ENCODE measurements at regions of chr10 and their contacts with region 1.

Region 1: DNA sequence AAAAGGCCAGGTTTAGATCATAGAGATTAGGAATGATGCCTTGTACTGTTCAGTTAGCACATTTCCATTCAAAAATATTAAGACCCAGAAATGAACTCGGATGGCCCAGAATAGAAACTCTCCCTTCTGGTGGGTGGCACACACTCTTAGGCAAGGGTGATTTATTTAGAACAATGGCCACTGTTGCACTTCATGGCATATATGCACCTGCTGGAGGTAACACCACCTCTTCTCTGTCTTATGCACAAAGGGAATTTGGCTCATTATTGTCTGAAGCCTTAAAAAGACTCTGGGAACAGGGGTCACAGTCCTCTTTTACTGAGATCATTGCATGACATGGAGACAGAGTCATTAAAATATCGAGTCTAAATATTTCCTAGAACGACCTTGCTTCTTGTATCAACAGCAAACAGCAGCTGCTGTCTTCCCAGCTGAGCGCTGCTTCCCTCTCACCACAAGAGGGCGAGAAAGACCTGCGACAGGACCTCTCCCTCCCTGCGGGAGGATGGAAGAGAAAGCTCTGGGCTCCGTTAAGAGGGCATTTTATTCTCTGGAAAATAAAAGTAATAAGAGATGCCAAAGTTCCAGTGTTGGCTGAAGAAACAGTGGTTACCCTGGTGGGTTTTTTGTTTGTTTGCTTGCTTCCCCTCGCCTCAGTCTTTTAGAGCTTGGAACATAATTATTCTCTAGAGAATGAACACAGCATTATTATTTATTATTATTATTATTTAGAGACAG is 13.6 kb upstream of the BAMBI start:
- DNase-seq: peak; percentile 45
- H3K4me3 ChIP-seq: no peak overlapping the region
- CTCF ChIP-seq: peak; percentile 95

Region 2: DNA sequence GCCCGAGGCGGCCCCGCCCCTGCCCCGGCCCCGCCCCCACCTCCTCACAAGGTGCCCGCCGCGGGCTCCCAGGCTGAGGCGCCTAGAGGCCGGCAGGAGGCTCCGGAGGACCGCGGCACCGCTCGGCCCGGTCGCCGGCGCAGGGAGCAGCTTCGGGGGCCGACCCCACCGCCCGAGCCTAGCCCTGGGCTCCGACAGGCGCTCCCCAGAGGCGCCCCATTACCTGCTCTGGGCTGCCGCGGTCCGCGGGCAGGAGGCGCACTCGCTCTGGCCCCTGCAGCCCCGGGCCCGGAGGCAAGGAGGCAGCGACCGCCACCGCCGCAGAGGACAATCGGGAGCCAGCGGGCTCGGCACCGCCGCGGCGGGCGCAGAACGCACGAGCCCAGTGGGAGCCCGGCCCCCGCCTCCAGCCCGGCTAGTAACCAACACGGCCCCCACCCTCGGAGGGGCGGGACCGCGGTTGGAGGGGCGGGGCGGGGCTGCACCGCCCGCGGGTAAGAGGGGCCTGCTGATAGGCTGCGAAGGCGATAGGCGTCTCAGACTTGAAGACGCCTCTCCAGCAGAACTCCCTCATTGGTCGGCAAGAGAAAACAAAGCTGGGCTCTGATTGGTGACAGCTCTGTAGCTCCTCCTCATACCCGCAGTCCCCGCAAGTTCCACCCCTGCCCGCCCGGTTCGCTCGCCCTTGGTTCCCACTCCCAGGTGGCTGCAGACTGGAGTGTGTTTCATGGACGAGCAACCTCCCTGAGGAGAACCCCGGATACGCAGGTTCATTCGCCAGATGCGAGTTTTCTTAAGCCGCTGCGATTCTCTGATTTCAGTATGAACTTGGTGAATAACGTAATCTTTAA is 360.9 kb before region 1 on chr10 and contains the start of gene MPP7:
- CTCF ChIA-PET with region 1: no interaction called
- POLR2A ChIA-PET with region 1: no interaction called
- DNase-seq: peak; percentile 95
- H3K4me3 ChIP-seq: peak within 1 kb of the TSS; percentile 71
- CTCF ChIP-seq: no peak

Region 3: DNA sequence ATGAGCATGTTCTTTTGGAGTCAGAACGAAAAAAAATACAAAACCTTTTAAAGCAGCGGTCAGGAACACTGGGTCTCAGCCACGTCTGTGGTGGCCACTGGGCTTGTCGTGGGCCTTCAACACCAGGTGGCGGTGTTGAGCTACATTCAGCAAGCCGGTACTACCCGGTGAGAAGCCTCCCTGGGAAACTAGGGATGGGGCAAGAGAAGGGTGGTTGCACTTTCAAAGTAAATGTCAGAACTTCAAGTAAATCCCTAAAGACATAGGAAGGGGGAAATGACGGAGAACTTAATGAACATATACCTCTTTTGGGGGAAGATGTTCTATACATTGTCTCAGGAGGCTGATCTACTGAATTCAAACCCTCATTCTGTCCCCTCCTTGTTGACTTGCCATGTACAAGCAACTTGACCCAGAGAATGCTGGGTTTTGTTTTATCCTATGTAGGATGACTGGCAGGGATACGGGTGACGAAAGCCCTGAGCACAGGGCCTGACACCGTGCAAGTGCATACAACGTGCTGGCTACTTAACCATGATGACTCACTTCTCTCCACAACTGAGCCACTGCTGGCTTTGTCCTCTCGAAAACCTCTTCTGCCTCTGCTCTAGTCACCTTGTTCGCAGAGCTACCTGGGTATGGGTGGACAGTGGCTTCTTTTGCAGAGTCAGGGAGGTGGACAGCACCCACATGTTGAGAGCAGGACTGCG is 35.4 kb before region 1 on chr10:
- CTCF ChIA-PET with region 1: interaction called, 31 read pairs
- POLR2A ChIA-PET with region 1: no interaction called
- DNase-seq: peak; percentile 19
- H3K4me3 ChIP-seq: no peak overlapping the region
- CTCF ChIP-seq: peak; percentile 91

Region 4: GRCh38 chr10:28991326-28992270 is 327.9 kb after region 1 on chr10:
- CTCF ChIA-PET with region 1: interaction called, 61 read pairs
- POLR2A ChIA-PET with region 1: no interaction called
- DNase-seq: no peak
- H3K4me3 ChIP-seq: no peak overlapping the region
- CTCF ChIP-seq: peak; percentile 48

Region 5: DNA sequence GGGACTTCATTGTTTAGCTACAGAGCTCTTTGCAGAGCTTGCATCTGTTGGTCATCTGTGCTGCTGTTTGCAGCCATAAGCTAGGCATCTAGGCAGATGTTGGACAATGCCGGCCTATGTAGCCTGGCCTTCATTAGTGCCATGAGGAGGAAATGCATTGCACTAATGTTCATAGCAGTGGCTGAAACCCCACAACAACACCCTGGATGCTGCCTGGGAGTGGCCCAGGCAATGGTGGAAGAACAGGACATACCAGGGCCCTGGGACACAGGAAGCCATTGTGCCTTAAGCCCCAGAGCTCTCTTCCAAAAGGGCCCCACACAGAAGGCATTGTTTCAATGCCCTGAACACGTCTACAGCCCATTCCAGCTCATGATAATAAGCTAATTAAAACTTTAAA is 493.6 kb after region 1 on chr10:
- CTCF ChIA-PET with region 1: interaction called, 13 read pairs
- POLR2A ChIA-PET with region 1: no interaction called
- DNase-seq: no peak
- H3K4me3 ChIP-seq: no peak overlapping the region
- CTCF ChIP-seq: no peak

Region 6: GRCh38 chr10:29304264-29305030 is 640.7 kb after region 1 on chr10:
- CTCF ChIA-PET with region 1: interaction called, 110 read pairs
- POLR2A ChIA-PET with region 1: no interaction called
- DNase-seq: no peak
- H3K4me3 ChIP-seq: no peak overlapping the region
- CTCF ChIP-seq: peak; percentile 74

Region 7: DNA sequence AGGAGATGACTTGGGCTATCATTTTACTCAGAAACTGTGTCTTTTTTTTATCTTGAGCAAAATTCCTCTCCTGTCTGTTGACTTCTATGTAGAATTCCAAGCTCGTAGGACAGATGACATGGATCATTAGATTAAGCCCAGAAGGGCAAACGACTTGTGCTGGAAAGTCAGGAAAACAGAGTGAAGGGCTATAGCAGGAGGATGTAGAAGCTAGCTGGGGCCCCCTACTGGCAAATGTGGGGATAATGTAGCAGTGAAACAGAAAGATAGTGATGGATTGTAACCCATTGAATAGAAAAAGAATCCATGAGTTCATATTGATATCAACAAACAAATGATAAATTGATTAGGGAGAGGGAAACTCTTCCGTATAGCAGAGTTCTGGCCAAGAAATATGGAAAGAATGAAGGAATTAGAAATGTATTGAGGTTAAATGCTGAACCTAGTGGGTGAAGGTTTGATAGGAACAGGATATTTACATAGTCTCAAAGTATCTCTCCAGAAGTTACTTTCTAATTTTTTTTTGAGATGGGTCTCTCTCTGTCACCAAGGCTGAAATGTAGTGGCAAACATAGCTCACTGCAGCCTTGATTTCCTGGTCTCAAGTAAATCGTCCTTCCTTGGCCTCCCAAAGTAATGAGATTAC is 728.8 kb after region 1 on chr10:
- CTCF ChIA-PET with region 1: interaction called, 21 read pairs
- POLR2A ChIA-PET with region 1: no interaction called
- DNase-seq: no peak
- H3K4me3 ChIP-seq: no peak overlapping the region
- CTCF ChIP-seq: peak; percentile 65